CD4-positive, alpha-beta T cell (primary cell): ENCODE measurements at regions of chr18 and their contacts with region 1.

Region 1: DNA sequence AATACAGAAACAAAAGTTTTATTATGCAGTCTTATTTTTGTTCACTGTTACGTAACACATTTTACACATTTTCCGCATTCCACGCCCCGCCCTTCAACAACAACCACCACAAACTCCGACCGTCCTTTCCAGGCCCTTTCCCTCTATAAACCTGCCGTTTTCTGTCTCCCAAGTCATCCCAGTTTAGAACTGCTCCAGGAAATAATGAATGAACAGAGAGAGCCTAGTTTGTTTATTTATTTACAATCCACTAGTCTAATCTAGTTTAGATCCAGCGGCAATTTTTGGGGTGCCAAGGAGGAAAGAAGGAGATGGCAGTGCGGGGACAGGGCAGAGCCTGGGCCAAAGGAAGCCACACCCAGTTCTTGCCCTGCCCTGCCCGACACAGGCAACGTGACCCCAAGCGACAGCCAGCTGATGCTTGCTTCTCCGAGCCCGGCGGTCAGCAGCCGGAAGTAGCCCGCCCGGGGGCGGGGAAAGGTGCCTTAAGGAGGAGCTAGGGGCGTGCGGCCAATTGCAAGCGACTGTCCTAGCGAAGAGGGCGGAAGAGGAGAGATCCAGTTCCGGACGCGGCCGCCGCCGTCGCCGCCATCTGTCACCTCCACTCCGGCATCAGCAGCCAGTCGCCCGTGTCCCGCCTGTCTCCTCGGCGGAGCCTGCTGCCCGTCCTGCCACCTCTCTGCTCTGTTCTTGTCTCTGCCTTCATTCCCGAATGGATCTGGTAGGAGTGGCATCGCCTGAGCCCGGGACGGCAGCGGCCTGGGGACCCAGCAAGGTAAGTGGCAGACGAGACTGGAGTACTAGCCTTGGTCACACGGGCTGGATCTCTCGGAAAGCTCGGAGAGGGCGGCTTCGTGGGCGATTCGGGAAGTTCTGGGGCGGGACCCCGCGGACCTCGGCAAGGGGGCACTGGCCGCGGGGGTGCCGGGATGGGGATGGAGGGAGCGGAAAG is at the start of gene RIOK3:
- DNase-seq: peak; percentile 66 to 94 (median 82)
- ATAC-seq: peak; percentile 88
- H3K4me3 ChIP-seq: peak within 1 kb of the TSS; percentile 88
- H3K4me3 Mint-ChIP-seq: peak within 1 kb of the TSS; percentile 98
- H3K27ac ChIP-seq: peak within 1 kb of the TSS; percentile 80 to 81
- H3K27ac Mint-ChIP-seq: peak within 1 kb of the TSS; percentile 89
- H3K4me1 ChIP-seq: peaks cover 22% of the 10 kb centered on the region
- H3K4me1 Mint-ChIP-seq: peaks cover 53% of the 10 kb centered on the region
- H3K27me3 ChIP-seq: no peaks in the 10 kb centered on the region
- H3K27me3 Mint-ChIP-seq: no peaks in the 10 kb centered on the region
- CTCF ChIP-seq: no peak
- total RNA-seq, gene RIOK3: 151 to 153 TPM

Region 2: DNA sequence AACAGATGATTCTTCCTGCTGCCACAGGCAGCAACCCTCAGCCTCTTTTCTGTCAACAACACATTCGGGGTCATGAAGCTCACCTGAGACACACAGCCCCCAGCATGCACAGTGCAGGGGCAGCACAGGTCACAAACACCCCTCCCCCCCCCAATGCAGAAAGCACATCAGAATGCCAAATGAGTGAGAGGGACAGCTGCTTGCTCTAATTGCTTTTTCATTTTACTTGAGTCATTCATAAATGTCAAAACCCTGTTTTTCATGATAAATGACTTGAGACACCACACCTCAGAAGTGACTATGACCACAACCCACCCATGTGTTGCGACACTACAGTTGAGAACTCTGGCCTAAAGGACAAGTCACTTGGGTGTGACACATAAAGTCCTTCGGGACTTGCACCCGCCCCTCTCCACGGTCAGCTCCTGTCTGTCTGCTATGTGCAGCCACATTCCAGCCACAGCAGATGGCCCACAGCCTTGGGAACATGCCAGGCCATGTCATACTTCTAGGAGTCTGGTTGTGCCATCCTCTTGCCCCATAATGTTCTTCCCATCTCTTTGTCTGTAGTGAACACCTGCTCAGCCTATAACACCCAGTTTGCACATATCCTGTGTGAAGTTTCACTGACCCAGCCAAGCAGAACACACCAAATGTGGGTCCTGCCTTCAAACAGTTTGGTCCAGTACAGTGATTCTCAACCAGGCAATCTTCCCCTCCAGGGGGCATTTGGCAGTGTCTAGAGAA is 30.2 kb before region 1 on chr18:
- CTCF ChIA-PET with region 1: no interaction called
- POLR2A ChIA-PET with region 1: no interaction called
- intact Hi-C with region 1: no loop called
- DNase-seq: peak in 3 of 14 experiments; percentile 41 to 70 (median 51)
- ATAC-seq: no peak
- H3K4me3 ChIP-seq: no peak overlapping the region
- H3K4me3 Mint-ChIP-seq: no peak overlapping the region
- H3K27ac ChIP-seq: no peak overlapping the region
- H3K27ac Mint-ChIP-seq: no peak overlapping the region
- H3K4me1 ChIP-seq: peaks cover 3% of the 10 kb centered on the region
- H3K4me1 Mint-ChIP-seq: no peaks in the 10 kb centered on the region
- H3K27me3 ChIP-seq: no peaks in the 10 kb centered on the region
- H3K27me3 Mint-ChIP-seq: no peaks in the 10 kb centered on the region
- CTCF ChIP-seq: no peak

Region 3: GRCh38 chr18:23437357-23438045 is 15.5 kb before region 1 on chr18:
- CTCF ChIA-PET with region 1: no interaction called
- POLR2A ChIA-PET with region 1: interaction called, 13 read pairs
- intact Hi-C with region 1: loop called in 1 of 2 experiments (anchors 2 kb)
- DNase-seq: peak; percentile 45 to 81 (median 68)
- ATAC-seq: peak; percentile 98
- H3K4me3 ChIP-seq: peak overlapping the region; percentile 77
- H3K4me3 Mint-ChIP-seq: peak overlapping the region; percentile 89
- H3K27ac ChIP-seq: no peak overlapping the region
- H3K27ac Mint-ChIP-seq: peak overlapping the region; percentile 36
- H3K4me1 ChIP-seq: peaks cover 17% of the 10 kb centered on the region
- H3K4me1 Mint-ChIP-seq: peaks cover 14% of the 10 kb centered on the region
- H3K27me3 ChIP-seq: no peaks in the 10 kb centered on the region
- H3K27me3 Mint-ChIP-seq: no peaks in the 10 kb centered on the region
- CTCF ChIP-seq: no peak

Region 4: DNA sequence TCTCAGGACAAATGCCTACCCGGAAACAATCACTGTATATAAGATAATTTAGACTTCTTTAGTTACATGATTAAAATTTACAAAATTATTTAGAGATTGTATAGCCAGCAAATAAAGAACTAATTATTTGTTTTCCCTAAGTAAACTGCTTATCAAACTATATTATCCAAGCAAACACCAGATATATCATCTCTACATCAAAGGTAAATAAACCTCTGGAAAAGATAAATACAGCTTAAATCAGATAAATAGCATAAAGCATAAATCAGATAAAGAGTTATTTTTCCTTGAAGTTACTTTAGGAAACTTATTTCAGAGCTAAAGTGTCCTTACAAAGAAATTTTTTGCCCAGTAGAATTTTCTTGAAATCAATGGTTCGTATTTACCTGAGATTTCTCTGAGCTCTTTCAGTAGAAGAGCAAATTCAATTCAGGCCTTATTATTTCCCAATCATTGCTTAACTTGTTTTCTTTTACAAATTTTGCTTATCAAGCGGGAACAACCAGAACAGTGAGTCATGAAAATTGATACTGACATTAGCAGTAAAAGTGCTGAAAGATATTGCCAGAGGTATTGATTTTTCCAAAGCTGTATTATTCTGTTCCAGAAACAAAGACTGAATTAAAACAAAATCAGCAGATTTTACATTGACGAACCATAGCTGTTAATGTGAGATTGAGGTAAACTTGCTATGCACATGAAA is 10.2 kb before region 1 on chr18:
- CTCF ChIA-PET with region 1: no interaction called
- POLR2A ChIA-PET with region 1: interaction called, 13 read pairs
- intact Hi-C with region 1: no loop called
- DNase-seq: no peak
- ATAC-seq: no peak
- H3K4me3 ChIP-seq: no peak overlapping the region
- H3K4me3 Mint-ChIP-seq: no peak overlapping the region
- H3K27ac ChIP-seq: no peak overlapping the region
- H3K27ac Mint-ChIP-seq: no peak overlapping the region
- H3K4me1 ChIP-seq: peaks cover 7% of the 10 kb centered on the region
- H3K4me1 Mint-ChIP-seq: peaks cover 4% of the 10 kb centered on the region
- H3K27me3 ChIP-seq: no peaks in the 10 kb centered on the region
- H3K27me3 Mint-ChIP-seq: no peaks in the 10 kb centered on the region
- CTCF ChIP-seq: no peak

Region 5: DNA sequence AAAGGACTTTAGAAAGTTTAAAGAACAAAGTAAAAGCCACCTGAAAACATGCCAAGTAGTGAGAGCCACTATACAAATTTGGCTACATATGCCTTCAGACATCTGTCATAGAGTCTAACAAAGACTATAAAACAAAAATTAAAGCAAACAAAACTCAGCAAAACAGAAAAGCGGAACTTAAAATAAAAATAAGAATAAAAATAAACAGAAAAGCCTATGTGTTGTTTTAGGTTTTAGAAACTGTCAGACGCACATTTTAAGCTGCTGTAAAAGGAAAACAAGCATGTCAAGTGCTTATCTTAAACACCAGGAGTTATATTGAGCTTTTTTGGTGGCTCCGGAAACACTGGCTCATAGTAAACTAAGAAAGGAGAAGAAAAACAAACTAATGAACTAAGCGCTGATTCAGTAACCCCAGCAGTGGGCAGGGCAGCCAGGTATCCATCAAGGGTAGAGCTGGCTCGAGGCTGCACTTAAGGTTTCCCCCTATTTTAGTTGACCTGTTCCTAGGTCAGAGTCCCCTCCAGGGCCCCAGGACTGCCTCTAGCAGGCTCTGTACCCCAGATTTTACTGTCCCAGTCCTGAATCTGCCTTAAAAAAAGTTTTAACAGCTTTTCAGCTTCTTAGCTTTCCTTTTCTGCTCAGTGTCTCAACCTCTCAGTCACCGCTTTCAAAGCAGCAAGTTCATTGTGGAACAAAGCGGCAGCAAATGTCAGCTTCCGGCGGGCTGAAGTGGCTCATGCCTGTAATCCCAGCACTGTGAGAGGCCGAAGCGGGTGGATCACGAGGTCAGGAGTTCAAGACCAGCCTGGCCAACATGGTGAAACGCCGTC is 35.0 kb after region 1 on chr18:
- CTCF ChIA-PET with region 1: interaction called, 3 read pairs
- POLR2A ChIA-PET with region 1: interaction called, 12 read pairs
- intact Hi-C with region 1: no loop called
- DNase-seq: peak in 12 of 14 experiments; percentile 17 to 65 (median 43)
- ATAC-seq: peak; percentile 69
- H3K4me3 ChIP-seq: peak overlapping the region; percentile 32
- H3K4me3 Mint-ChIP-seq: peak overlapping the region; percentile 83
- H3K27ac ChIP-seq: peak overlapping the region; percentile 46 to 70
- H3K27ac Mint-ChIP-seq: peak overlapping the region; percentile 92
- H3K4me1 ChIP-seq: peaks cover 9% of the 10 kb centered on the region
- H3K4me1 Mint-ChIP-seq: peaks cover 19% of the 10 kb centered on the region
- H3K27me3 ChIP-seq: no peaks in the 10 kb centered on the region
- H3K27me3 Mint-ChIP-seq: no peaks in the 10 kb centered on the region
- CTCF ChIP-seq: no peak